ENCODE measurements at regions of chr7 and their contacts with region 1.

Region 1: DNA sequence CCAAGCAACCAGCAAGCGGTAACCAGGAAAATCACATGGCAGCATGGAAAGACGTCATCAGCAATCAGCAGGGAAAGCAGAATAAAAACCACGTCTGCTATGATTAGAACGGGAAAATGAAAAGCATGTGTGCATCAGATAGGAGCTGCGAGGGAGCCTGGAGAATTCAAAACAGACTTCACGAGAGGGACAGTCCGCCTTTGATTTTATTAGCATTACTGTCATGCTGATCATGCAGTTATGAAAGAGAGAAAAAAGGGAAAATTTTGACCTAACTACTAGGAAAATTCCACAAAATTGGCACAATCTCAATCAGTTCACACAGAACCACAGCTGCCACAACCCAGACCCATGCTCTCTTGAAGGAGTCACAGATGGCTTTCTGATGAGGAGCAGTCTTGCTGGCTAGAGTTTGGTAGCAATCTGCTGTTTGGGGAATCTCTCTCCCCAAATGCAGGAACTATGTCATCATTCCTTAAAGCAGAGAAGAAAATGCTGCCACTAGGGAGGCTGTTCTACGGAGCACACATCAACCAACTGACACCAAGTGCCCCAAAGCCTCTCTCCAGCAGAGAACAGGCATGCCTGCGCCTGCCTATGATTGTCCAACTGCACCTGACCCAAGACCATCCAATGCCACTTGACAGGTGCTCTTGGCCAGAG is 295.9 kb downstream of the TNS3 start:
- DNase-seq: no peak
- ATAC-seq: peak; percentile 27 to 72 (median 52)
- H3K4me3 ChIP-seq: no peak overlapping the region
- H3K27ac ChIP-seq: peak overlapping the region in 10 of 12 donors; percentile 6 to 57 (median 46)
- H3K4me1 ChIP-seq: peaks cover 0 to 26% (median 11%) of the 10 kb centered on the region in 12 donors
- H3K27me3 ChIP-seq: no peaks in the 10 kb centered on the region
- CTCF ChIP-seq: peak in 5 of 12 donors; percentile 15 to 39 (median 25)
- POLR2A ChIP-seq: no peak

Region 2: GRCh38 chr7:47254081-47255006 is 31.6 kb before region 1 on chr7:
- intact Hi-C with region 1: no loop called
- DNase-seq: peak; percentile 82 to 92 (median 89)
- ATAC-seq: peak; percentile 82 to 95 (median 92)
- H3K4me3 ChIP-seq: peak overlapping the region; percentile 39 to 80 (median 61)
- H3K27ac ChIP-seq: peak overlapping the region; percentile 79 to 98 (median 90)
- H3K4me1 ChIP-seq: peaks cover 0 to 18% (median 16%) of the 10 kb centered on the region in 12 donors
- H3K27me3 ChIP-seq: no peaks in the 10 kb centered on the region
- CTCF ChIP-seq: peak; percentile 63 to 100 (median 98)
- POLR2A ChIP-seq: peak in 1 of 2 donors; percentile 57

Region 3: DNA sequence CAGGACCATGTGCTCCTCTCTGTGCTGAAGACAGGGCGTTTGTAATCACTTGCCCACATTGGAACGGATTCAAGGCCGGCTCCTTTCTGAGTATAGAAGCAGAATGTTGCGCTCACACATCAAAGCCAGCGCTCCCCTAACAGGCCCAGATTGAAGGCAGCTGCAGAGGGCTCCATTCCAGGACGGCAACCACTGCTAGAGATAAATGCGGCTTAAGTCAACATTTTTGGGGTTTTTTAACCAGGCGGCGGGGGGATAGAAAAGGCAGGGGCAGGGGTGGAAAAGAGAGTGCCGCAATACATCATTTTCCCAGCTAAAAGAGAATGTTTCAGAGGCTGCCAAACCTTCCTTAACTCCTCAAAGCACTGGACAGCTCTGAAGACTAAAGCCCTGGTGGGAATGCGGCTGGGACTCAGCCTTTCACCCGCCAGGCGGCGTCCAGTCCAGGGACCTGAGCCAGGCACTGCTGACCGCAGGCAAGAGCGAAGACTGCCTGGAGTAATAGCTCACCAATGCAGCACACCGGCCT is 106.3 kb after region 1 on chr7:
- intact Hi-C with region 1: loop called in 1 of 10 experiments (anchors 10 kb)
- DNase-seq: peak; percentile 68 to 82 (median 72)
- ATAC-seq: peak; percentile 64 to 87 (median 84)
- H3K4me3 ChIP-seq: no peak overlapping the region
- H3K27ac ChIP-seq: no peak overlapping the region
- H3K4me1 ChIP-seq: peaks cover 0 to 12% (median 0%) of the 10 kb centered on the region in 12 donors
- H3K27me3 ChIP-seq: no peaks in the 10 kb centered on the region
- CTCF ChIP-seq: peak in 11 of 12 donors; percentile 7 to 60 (median 41)
- POLR2A ChIP-seq: no peak

Region 4: GRCh38 chr7:47435889-47436312 is 149.9 kb after region 1 on chr7:
- intact Hi-C with region 1: no loop called
- DNase-seq: peak in 4 of 5 donors; percentile 68 to 83 (median 72)
- ATAC-seq: peak; percentile 82 to 92 (median 87)
- H3K4me3 ChIP-seq: no peak overlapping the region
- H3K27ac ChIP-seq: no peak overlapping the region
- H3K4me1 ChIP-seq: peaks cover 0 to 5% (median 0%) of the 10 kb centered on the region in 12 donors
- H3K27me3 ChIP-seq: no peaks in the 10 kb centered on the region
- CTCF ChIP-seq: peak; percentile 63 to 87 (median 78)
- POLR2A ChIP-seq: no peak

Measured in heart left ventricle (tissue), 16 donors.